Activated naive CD4-positive, alpha-beta T cell treated with anti-CD3 and anti-CD28 coated beads, Interleukin-2, amount 10 ng/mL, durations not matched to agents 7 days and 5 days (primary cell): ENCODE measurements at regions of chr19 and their contacts with region 1.

Region 1: DNA sequence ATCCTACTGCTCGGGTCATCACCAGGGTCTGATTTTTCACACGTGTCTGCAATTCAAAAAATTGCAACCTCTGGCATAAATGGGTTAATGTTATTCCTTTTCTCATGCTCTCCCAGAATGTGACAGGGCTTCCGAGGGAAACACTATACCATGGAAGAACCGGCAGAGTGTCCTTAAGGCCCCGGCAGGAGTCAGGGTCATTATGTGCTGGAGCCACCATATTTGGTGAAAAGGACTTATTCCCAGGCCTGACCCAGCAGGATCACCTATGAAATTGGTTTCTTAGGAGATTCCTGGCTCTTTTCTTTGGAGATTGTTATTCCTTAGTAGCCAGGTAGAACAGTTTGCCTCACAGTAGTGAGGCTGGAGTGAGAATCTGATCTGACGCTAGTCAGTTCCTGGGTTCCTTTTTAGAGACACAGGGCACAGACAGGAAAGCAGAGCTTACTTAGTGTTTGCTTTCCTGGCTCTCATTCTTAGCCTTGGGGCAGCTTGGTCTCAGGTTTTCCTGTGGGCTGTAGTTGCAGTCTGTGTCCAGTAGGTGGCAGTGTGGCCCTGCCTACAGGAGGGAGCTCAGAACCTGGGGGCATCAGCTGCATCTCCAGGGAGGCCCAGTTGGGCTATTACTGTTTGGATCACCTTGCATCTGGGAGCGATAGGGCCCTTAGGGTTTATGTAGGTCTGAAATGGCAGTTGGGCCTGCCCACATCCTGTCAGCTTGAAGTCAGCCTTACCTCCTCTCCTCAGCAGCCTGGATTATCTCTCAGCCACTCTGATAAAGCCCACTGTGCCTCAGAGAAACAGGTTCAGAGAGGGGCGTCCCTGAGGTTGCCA is 12.4 kb downstream of the SNRNP70 start:
- DNase-seq: peak; percentile 81
- H3K4me3 Mint-ChIP-seq: no peak overlapping the region
- H3K27ac Mint-ChIP-seq: peak overlapping the region; percentile 80
- H3K4me1 Mint-ChIP-seq: peaks cover 13% of the 10 kb centered on the region
- H3K27me3 Mint-ChIP-seq: no peaks in the 10 kb centered on the region

Region 2: GRCh38 chr19:49113762-49114629 is 16.3 kb after region 1 on chr19 and contains the start of gene LIN7B:
- CTCF ChIA-PET with region 1: interaction called, 37 read pairs
- DNase-seq: peak; percentile 80
- H3K4me3 Mint-ChIP-seq: peak within 1 kb of the TSS; percentile 79
- H3K27ac Mint-ChIP-seq: peak within 1 kb of the TSS; percentile 49
- H3K4me1 Mint-ChIP-seq: peaks cover 40% of the 10 kb centered on the region
- H3K27me3 Mint-ChIP-seq: no peaks in the 10 kb centered on the region

Region 3: DNA sequence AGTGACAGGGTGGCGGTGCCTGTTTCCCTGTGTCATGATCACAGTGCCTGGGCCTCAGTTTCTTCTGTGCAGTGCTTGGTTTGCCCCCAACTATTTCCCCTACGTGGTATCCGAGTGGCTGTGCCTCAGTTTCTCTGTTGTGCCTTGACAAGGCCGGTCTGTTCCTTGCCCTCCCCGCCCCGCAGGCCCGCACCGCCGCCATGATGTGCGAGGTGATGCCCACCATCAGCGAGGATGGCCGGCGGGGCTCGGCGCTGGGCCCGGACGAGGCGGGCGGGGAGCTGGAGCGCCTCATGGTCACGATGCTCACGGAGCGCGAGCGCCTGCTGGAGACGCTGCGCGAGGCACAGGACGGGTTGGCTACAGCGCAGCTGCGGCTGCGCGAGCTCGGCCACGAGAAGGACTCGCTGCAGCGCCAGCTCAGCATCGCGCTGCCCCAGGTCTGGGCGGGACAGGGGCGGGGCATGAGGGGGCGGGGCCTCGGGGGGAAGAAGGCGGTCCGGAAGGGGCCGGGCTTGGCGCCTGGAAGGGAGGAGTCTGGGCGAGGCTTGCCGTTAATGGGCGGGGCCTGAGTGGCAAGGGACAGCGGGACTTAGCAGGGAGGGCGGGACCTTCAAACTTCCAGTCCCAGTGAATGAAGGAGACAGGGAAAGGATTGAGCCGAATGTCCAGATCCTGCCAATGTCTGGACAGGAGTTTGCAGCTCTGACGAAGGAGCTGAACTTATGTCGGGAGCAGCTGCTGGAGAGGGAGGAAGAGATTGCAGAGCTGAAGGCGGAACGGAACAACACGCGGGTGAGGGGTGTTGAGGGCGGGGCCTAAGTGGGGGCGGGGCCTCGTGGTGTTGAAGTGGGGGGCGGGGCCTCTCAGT is 30.2 kb after region 1 on chr19:
- CTCF ChIA-PET with region 1: interaction called, 10 read pairs
- DNase-seq: peak; percentile 95
- H3K4me3 Mint-ChIP-seq: peak overlapping the region; percentile 75
- H3K27ac Mint-ChIP-seq: peak overlapping the region; percentile 79
- H3K4me1 Mint-ChIP-seq: peaks cover 16% of the 10 kb centered on the region
- H3K27me3 Mint-ChIP-seq: peaks cover 38% of the 10 kb centered on the region

Region 4: GRCh38 chr19:49145573-49146407 is 48.1 kb after region 1 on chr19:
- CTCF ChIA-PET with region 1: interaction called, 19 read pairs
- DNase-seq: peak; percentile 82
- H3K4me3 Mint-ChIP-seq: peak overlapping the region; percentile 52
- H3K27ac Mint-ChIP-seq: no peak overlapping the region
- H3K4me1 Mint-ChIP-seq: peaks cover 41% of the 10 kb centered on the region
- H3K27me3 Mint-ChIP-seq: peaks cover 77% of the 10 kb centered on the region

Region 5: DNA sequence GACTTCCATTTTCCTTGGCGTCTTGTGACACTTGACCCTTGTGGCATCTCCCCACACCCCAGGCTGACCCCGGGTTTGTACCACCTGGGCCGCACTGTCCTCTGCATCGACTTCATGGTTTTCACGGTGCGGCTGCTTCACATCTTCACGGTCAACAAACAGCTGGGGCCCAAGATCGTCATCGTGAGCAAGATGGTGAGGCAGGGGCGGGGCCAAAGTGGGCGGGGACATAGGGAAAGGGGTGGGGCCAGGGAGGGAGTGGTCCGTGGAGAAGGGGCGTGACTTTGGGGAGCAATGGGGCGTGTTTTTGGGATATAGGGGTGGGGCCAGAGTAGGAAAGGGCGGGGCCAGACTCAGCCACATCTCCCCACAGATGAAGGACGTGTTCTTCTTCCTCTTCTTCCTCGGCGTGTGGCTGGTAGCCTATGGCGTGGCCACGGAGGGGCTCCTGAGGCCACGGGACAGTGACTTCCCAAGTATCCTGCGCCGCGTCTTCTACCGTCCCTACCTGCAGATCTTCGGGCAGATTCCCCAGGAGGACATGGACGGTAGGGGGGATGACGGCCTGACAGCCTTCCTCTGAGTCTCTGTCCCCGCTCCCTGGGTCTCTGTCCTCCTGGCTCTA is 102.7 kb after region 1 on chr19:
- CTCF ChIA-PET with region 1: interaction called, 29 read pairs
- DNase-seq: peak; percentile 25
- H3K4me3 Mint-ChIP-seq: no peak overlapping the region
- H3K27ac Mint-ChIP-seq: no peak overlapping the region
- H3K4me1 Mint-ChIP-seq: peaks cover 7% of the 10 kb centered on the region
- H3K27me3 Mint-ChIP-seq: peaks cover 7% of the 10 kb centered on the region

Region 6: GRCh38 chr19:49224856-49225255 is 127.2 kb after region 1 on chr19:
- CTCF ChIA-PET with region 1: interaction called, 13 read pairs
- DNase-seq: peak; percentile 69
- H3K4me3 Mint-ChIP-seq: no peak overlapping the region
- H3K27ac Mint-ChIP-seq: no peak overlapping the region
- H3K4me1 Mint-ChIP-seq: peaks cover 10% of the 10 kb centered on the region
- H3K27me3 Mint-ChIP-seq: peaks cover 20% of the 10 kb centered on the region